ENCODE measurements at regions of chr19 and their contacts with region 1.

Region 1: GRCh38 chr19:47507012-47507411 is 7.9 kb downstream of the NAPA start:
- DNase-seq: peak; percentile 41 to 62
- H3K4me3 ChIP-seq: no peak overlapping the region
- H3K27ac ChIP-seq: peak overlapping the region in 2 of 3 donors; percentile 38 to 53
- H3K4me1 ChIP-seq: peaks cover 49 to 54% of the 10 kb centered on the region in 2 donors
- H3K27me3 ChIP-seq: no peaks in the 10 kb centered on the region
- CTCF ChIP-seq: no peak
- POLR2A ChIP-seq: no peak

Region 2: DNA sequence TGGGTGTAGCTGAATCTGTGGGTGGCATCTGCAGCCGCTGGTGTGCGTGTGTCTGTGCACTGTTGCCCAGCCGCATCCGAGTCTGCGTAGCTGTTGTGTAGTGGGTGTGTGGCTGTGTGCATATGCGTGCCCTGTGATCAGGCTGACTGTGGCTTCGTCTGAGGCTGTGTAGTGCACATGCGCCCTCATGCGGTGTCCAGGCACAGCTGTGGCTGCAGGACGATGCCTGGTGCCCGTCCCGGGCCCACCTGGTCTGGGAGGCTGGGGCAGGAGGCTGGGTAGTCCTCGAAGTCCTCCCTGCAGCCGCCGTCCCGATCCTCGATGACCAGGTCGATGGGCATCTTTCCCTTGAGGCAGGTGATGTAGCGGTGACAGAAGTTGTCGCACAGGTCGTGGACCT is 92.5 kb before region 1 on chr19:
- intact Hi-C with region 1: no loop called
- DNase-seq: no peak
- H3K4me3 ChIP-seq: no peak overlapping the region
- H3K27ac ChIP-seq: no peak overlapping the region
- H3K4me1 ChIP-seq: no peaks in the 10 kb centered on the region
- H3K27me3 ChIP-seq: peaks cover 4% of the 10 kb centered on the region
- CTCF ChIP-seq: no peak
- POLR2A ChIP-seq: no peak

Region 3: DNA sequence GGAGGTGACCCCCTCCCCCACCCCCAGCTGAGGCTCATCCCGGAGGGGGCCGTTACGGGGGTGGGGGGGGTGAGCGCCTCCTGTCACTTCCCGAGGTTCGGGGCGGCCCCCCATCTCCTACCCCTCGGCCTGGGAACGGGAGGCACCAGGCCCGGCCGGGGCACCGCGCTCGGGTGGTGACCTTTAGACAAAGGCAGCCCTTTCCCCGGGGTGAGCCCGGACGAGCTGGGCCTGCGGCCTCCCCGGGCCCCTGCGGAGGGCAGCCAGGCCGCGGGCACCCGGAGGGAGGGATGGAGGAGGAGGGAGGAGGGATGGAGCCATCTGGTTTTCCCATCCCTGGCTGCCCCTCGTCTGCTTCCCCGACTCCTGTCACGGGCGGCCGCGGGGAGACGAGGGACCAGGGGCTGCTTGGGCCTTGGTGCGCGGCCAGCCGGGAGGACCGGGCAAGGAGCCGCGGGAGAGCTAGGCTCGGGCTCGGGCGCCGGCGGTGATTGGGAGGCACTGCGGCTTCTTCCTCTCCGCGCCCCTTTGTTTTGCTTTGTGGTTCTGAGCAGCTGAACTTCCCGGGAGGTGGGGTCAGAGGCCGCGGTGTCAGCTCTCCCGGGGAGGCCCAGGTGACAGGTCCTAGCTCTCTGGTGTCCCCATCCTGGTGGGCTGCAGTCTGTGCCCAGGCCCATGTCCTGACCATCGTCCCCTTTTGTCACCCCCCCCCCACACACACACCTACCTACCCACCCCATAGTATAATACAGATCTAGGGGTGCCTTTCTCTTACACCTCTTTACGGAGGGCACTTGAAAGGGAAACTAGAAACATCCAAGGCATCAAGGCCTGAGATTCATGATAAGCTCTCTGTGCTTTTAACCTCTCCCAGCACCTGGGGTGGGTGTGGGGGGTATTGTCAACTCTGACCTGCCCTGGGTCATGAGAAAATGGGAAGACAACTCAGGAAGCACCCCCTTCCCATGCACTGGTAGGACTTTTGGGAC is 103.2 kb after region 1 on chr19:
- intact Hi-C with region 1: loop called (anchors 5 kb)
- DNase-seq: peak; percentile 47 to 50
- H3K4me3 ChIP-seq: peak overlapping the region; percentile 64 to 93 (median 78)
- H3K27ac ChIP-seq: peak overlapping the region; percentile 60 to 85 (median 83)
- H3K4me1 ChIP-seq: peaks cover 15 to 28% of the 10 kb centered on the region in 2 donors
- H3K27me3 ChIP-seq: no peaks in the 10 kb centered on the region
- CTCF ChIP-seq: no peak
- POLR2A ChIP-seq: no peak

Measured in thyroid gland (tissue), 4 donors.